ENCODE measurements at regions of chr11 and their contacts with region 1.

Region 1: DNA sequence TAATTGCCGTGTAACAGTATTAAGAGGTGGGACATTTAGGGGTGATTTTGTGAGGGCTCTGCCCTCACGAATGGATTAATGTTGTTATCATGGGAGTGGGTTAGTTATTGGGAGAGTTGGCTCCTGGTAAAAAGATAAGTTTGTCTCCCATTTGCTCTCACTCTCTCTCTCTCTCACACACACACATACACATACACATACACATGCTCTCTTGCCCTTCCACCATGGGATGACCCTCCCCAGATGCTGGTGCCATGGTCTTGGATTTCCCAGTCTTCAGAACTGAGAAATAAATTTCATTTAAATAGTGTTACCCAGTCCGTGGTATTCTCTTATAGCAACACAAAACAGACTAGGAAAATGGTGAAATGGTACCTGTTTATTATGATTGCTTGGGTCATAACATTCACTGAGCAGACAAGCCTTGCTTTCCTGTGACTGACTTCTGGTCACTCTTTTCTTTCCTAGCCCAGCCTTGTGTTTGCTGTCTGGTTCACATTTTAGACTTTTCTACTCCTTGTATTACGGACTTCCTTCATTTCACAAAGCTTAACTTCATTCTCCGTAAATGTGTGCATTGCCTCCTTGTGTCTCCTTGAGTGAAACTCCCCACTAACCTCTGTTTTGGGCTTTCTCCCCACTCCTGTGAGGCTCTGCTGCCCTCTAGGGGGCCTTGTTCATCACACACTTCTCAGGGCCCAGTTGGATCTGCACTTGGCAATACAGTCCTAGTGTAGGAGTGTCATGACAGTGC is 206.5 kb upstream of the CTSC start:
- DNase-seq: peak; percentile 73 to 80
- ATAC-seq: peak; percentile 89 to 98 (median 92)
- H3K4me3 ChIP-seq: no peak overlapping the region
- H3K27ac ChIP-seq: no peak overlapping the region
- H3K4me1 ChIP-seq: no peaks in the 10 kb centered on the region
- H3K27me3 ChIP-seq: no peaks in the 10 kb centered on the region
- CTCF ChIP-seq: peak; percentile 87

Region 2: DNA sequence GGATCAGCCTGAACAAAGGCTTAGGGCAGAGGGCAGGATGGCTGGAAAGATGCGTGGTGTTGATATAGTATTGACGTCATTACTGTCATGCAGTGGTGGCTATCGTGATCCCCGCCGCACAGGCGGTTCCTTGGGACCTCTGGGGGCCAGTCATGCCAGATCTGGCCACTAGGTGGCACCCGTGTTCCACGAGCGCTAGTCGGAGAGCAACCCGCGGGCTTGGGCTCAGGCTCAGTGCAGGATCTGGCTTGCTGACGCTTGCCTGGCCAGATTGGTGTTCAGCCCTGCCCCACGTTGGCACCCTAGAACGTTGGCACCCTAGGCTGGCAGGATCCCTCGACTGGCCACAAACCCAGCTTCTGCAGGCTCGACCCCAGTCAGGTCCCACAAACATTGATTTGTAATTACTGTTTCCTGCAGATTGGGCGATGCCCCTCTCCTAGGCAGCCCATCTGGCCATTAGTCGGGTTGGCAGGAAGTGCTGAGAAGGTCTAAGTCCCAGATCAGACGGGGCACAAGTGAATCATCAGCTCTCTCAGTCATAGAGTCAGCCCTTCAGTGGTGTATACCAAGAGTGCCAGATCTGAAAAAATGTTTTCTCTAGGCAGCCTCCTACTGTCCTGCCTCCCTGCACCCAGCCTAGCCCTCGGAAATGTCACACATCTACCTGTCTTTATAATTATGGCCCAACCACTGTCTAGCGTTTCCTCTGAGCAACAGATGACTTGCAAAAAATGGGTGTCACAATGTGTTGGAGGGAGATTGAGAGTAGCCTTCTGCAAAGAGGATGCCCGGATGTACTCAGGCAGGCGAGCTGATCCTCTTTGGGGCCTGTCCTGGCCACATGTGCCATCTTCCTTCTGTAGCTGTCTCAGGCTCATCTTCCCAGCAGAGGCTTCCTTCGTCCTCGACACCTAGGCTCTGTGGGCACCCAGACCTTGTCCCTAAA is 1191.0 kb before region 1 on chr11:
- intact Hi-C with region 1: loop called in 1 of 2 experiments (anchors 10 kb)
- DNase-seq: peak; percentile 84 to 92
- ATAC-seq: peak; percentile 92 to 96 (median 94)
- H3K4me3 ChIP-seq: no peak overlapping the region
- H3K27ac ChIP-seq: no peak overlapping the region
- H3K4me1 ChIP-seq: peaks cover 16% of the 10 kb centered on the region
- H3K27me3 ChIP-seq: no peaks in the 10 kb centered on the region
- CTCF ChIP-seq: peak; percentile 100

Region 3: DNA sequence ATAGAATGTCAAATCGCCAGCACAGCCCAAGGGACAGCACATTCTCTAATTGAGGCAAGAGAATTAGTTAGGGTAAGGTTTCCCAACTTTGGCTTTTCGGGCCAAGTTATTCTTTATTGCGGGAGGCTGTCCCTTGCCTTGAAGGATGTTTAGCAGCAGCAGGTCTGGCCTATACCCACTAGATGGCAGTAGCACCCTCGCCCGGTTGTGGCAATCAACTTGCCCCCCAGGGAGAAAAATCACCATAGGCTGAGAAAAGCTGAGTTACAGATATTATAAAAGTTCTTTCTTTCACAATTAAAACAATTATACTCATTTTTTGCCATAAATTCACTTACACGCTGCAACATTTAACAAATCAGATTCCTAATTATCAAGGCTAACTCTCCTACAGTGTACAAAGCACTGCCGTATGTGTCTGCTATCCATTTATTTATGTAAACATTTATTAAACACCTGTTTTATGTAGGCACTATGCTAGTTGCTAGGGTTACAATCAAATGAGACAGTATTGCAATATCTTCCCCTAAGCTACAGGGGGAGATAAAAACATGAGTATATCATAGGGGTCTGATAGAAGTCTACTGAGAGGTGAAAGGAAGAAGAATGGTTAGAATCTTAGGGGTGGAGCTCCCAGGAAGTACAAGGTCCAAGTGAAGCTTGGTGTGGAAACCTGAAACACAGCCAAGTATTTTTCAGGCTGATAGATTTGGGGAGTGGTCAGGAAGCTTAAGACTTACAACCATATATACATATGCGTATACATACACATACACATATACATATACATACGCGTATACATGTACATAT is 821.1 kb before region 1 on chr11:
- intact Hi-C with region 1: loop called in 1 of 2 experiments (anchors 10 kb)
- DNase-seq: no peak
- ATAC-seq: peak in 2 of 4 donors; percentile 50 to 80
- H3K4me3 ChIP-seq: no peak overlapping the region
- H3K27ac ChIP-seq: no peak overlapping the region
- H3K4me1 ChIP-seq: no peaks in the 10 kb centered on the region
- H3K27me3 ChIP-seq: no peaks in the 10 kb centered on the region
- CTCF ChIP-seq: peak; percentile 56

Region 4: DNA sequence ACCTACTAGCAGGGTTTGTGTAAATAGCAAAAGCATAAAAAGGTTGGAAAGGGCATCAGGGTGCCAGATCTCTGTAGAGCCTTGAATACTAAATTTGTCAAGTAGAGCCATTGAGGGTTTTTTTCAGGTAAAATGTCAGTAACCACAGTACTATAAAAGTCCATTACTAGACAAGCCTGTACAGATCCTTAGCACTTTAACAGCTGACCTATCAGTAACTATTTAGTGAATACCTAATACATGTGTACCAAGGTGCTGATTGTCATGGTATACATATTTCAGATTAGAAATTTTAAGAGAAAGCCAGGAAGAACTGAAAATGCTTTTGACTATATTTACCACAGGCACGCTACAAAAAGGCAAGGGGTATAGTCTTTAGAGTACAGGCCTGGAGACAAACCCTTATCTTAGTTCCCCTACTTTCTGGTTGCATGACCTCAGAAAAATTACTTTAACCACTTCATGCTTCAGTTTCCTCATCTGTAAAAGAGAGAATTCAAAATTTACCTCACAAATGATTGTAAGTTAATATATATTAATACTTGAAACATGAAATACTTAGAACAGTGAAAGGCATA is 426.7 kb before region 1 on chr11:
- intact Hi-C with region 1: loop called in 1 of 2 experiments (anchors 10 kb)
- DNase-seq: no peak
- ATAC-seq: no peak
- H3K4me3 ChIP-seq: no peak overlapping the region
- H3K27ac ChIP-seq: no peak overlapping the region
- H3K4me1 ChIP-seq: no peaks in the 10 kb centered on the region
- H3K27me3 ChIP-seq: no peaks in the 10 kb centered on the region
- CTCF ChIP-seq: no peak

Region 5: DNA sequence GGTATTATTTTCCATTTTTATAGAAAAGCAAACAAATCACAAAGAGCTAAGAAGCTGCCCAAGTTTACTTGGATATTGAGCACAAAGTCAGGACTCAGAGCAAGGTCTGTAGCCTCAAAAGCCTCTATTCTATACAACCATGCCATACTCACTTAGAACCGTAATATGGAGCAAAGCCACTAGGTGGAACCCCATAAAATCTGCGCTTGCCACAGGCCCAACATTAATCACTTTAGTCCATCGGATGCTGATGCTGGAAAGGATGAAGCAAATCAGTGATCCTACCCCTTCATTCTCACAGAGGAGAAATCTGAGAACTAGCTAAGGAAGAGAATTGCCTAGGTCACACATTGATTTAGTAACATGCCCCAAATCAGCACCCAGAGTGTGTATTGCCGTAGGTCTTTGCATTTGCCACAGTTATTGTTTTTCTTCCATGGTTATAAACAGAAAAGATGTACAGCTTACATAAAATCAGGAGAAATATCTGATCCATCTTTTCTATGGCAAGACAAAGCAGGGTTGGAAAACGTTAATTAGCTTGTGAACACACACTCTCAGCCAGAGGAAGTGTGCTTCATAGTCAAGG is 312.1 kb before region 1 on chr11:
- intact Hi-C with region 1: loop called in 1 of 2 experiments (anchors 2 kb)
- DNase-seq: no peak
- ATAC-seq: peak in 2 of 4 donors; percentile 47 to 54
- H3K4me3 ChIP-seq: no peak overlapping the region
- H3K27ac ChIP-seq: no peak overlapping the region
- H3K4me1 ChIP-seq: no peaks in the 10 kb centered on the region
- H3K27me3 ChIP-seq: no peaks in the 10 kb centered on the region
- CTCF ChIP-seq: peak; percentile 61

Region 6: DNA sequence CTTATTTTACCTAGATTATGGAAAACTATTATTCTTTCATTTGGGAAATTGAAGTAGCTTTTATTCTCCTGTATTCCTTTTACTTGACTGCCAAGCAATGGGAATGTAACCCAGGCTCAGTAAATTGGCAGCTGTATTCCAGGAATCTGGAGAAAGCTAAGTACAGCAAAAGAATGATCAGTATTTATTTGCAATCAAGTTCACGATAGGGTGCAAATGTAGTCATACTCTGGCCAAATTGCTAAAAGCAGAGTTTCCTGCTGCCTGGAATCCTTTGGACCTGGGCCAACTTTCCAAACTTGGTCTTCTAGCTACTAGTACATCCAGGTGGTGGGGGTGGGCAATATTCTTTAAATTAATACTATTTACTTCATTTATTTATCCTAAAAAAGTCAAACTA is 79.5 kb after region 1 on chr11:
- intact Hi-C with region 1: no loop called
- DNase-seq: no peak
- ATAC-seq: no peak
- H3K4me3 ChIP-seq: no peak overlapping the region
- H3K27ac ChIP-seq: no peak overlapping the region
- H3K4me1 ChIP-seq: no peaks in the 10 kb centered on the region
- H3K27me3 ChIP-seq: no peaks in the 10 kb centered on the region
- CTCF ChIP-seq: no peak

Measured in psoas muscle (tissue), 8 donors.